ENCODE measurements at regions of chr6 and their contacts with region 1.

Region 1: GRCh38 chr6:30590994-30591393 is 19.8 kb downstream of the ABCF1 start:
- DNase-seq: peak; percentile 48
- H3K4me3 ChIP-seq: no peak overlapping the region
- H3K27ac ChIP-seq: peak overlapping the region; percentile 66
- H3K27me3 ChIP-seq: no peaks in the 10 kb centered on the region
- CTCF ChIP-seq: no peak

Region 2: DNA sequence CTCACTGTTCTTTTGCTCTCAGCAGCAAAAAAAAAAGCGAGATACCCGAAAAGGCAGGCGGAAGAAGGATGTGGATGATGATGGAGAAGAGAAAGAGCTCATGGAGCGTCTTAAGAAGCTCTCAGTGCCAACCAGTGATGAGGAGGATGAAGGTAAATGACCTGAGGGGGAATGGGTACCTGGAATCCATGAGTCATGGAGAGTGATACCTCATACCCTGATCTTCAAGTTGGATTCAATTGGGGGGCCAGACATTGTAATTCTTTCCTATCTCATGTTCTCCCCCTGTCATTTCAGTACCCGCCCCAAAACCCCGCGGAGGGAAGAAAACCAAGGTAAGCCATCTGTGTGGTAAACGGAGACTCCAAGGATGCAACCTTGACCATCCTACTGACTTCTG is 12.9 kb before region 1 on chr6:
- CTCF ChIA-PET with region 1: interaction called, 11 read pairs
- POLR2A ChIA-PET with region 1: no interaction called
- DNase-seq: no peak
- H3K4me3 ChIP-seq: no peak overlapping the region
- H3K27ac ChIP-seq: no peak overlapping the region
- H3K27me3 ChIP-seq: no peaks in the 10 kb centered on the region
- CTCF ChIP-seq: no peak

Region 3: DNA sequence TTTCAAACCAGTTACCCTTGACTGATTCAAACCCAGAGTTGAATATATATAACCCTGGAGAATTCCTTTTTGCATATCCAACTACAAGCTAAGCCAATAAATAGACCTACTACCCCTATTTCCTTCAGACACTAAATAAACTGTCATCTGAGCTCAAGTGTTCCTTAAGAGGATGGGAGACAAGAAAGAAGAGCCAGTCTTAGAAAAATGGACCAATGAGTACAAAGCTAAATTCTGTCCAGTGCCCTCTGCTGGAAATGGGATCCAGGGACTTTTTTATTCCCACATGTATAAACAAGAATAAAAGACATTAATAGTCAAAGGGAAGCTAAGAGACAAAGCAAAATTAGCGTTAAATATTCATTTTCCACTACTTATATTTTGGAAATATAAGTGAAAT is 21.2 kb after region 1 on chr6:
- CTCF ChIA-PET with region 1: interaction called, 28 read pairs
- POLR2A ChIA-PET with region 1: interaction called, 69 read pairs
- DNase-seq: no peak
- H3K4me3 ChIP-seq: no peak overlapping the region
- H3K27ac ChIP-seq: no peak overlapping the region
- H3K27me3 ChIP-seq: no peaks in the 10 kb centered on the region
- CTCF ChIP-seq: peak; percentile 52

Measured in AG04450 (cell line).